ENCODE measurements at regions of chr1 and their contacts with region 1.

Region 1: DNA sequence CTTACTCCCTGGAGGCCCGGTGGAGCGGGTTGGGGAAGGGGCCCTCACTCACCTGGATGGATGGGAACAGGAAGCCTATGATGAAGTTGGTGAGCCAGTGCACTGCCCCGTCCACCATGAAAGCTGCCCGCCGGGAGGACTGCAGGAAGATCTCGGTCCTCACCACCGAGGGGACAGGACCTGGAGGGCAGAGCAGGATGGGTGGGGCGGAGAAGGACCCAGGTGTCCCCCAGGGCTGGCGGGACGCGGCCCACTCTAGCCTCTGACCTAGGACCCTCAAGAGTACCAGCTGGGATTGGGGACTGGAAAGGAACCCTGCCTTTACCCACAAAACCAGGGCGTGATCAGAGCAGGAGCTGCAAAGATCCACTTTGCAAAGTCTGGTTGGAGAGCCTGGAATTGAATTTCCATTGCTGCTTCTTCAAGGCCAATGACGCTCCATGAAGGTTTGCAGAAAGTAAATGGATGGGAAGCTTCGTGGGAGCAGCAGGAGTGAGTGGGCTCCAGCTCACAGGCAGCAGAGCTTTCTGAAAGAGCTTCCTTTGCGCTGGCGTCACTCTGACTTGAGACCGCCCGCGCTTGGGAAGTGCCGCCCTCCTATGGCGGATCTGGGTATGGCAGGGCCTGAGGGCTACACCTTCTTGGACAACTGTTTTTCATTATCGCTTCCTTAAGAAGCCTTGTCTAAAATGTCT is 21.4 kb downstream of the SLC2A7 start:
- DNase-seq: peak; percentile 76
- H3K4me3 ChIP-seq: no peak overlapping the region
- H3K27ac ChIP-seq: no peak overlapping the region
- H3K27me3 ChIP-seq: peaks cover 2% of the 10 kb centered on the region
- CTCF ChIP-seq: peak; percentile 97

Region 2: DNA sequence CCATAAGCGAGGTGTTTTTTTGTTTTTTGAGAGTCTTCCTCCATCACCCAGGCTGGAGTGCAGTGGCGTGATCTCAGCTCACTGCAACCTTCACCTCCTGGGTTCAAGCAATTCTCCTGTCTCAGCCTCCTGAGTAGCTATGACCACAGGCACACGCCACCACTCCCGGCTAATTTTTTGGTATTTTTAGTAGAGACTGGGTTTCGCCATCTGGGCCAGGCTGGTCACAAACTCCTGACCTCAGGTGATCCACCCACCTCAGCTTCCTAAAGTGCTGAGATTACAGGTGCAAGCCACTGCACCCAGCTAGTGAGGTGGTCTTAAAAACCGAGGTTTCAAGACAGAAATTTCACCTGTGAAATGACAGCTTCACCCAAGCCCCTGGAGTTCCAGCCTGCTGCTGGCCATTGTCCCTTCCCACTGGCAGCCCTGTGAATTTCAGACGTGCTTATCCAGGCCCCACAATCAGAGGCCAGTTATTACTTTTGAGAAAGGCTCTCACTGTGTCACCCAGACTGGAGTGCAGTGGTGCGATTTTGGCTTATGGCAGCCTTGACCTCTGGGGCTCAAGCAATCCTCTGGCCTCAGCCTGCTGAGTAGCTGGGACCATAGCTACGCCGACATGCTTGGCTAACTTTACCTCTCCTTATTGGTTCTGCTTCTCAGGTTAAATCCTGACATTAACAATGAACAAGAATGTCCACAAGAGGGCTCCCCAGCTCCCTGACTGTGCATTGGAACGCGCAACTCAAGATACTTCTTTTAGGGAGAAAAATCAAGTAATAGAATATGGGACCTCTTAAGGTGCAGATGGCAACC is 145.8 kb before region 1 on chr1:
- CTCF ChIA-PET with region 1: interaction called, 24 read pairs
- POLR2A ChIA-PET with region 1: interaction called, 4 read pairs
- DNase-seq: no peak
- H3K4me3 ChIP-seq: no peak overlapping the region
- H3K27ac ChIP-seq: no peak overlapping the region
- H3K27me3 ChIP-seq: no peaks in the 10 kb centered on the region
- CTCF ChIP-seq: peak; percentile 71

Region 3: DNA sequence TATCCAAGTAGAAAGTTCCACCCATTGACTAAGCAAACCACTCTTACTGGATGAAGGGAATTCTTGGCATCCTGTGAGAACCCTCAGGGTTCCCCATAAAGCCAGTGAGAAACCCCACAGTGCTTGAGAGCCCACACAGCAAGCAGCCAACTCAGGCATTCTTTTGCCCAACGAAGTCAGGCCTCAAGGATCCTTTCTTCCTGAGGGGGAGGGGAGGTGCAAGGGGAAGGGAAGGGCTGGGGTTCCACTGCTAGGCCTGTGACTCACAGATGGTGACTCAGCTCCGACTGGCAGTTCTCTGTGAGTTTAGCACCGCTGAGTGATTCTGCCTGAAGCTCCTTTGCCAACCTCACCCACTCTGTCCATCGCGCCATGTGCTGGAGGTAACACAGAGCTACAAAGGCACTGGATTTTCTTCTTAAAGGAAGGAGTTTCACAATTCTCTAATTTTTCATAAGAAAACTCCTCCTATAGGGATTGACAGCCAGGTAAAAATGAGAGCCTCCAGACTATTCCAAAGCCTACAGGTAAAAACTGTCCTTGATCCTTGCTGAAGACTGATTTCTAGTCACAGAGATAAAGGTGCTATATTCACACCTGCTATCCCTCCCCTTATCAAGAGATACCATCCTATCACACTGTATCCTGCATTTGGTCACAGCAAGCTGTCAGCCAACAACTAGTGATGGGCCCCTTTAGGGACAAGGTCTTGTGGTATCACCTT is 131.2 kb before region 1 on chr1:
- CTCF ChIA-PET with region 1: interaction called, 12 read pairs
- POLR2A ChIA-PET with region 1: interaction called, 5 read pairs
- DNase-seq: peak; percentile 84
- H3K4me3 ChIP-seq: peak overlapping the region; percentile 20; the same call in 1 of the 2 replicates
- H3K27ac ChIP-seq: peak overlapping the region; percentile 65
- H3K27me3 ChIP-seq: no peaks in the 10 kb centered on the region
- CTCF ChIP-seq: no peak

Region 4: GRCh38 chr1:8925406-8925805 is 79.4 kb before region 1 on chr1:
- CTCF ChIA-PET with region 1: interaction called, 162 read pairs
- POLR2A ChIA-PET with region 1: no interaction called
- DNase-seq: no peak
- H3K4me3 ChIP-seq: no peak overlapping the region
- H3K27ac ChIP-seq: no peak overlapping the region
- H3K27me3 ChIP-seq: peaks cover 20% of the 10 kb centered on the region
- CTCF ChIP-seq: no peak

Region 5: DNA sequence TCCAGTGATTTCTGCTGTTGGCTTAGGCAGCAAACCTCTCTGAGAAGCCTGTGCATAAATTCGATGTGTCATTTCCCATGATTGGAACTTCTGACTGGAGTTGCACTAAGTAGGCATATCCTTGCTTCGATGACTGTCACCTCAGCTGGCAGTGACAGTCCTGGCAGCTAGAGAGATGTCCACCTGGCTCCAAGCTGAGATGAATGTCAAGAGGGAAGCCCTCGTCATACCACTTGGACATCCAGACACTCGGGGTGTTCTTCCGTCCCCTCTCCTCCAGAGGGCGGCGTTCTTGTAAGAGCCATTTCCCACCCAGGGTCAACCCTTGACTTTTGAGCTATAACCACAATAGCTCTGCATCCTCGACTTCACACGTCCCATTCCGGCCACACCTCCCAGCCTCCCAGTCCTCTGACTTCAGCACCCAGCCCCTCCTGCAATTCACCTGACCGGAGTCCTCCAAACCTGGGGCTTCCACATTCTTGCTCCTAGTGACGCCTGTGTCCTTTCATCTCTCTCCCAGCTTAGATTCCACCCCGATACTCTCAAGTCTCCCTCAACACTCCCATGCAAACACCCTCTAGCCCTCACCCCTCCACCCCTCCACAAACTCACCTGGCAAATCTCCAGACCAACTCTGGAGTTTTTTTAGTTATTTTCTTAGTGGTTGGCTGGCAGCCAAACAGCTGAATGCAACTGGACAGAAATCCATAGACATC is 41.9 kb before region 1 on chr1:
- CTCF ChIA-PET with region 1: interaction called, 12 read pairs
- POLR2A ChIA-PET with region 1: interaction called, 5 read pairs
- DNase-seq: no peak
- H3K4me3 ChIP-seq: no peak overlapping the region
- H3K27ac ChIP-seq: no peak overlapping the region
- H3K27me3 ChIP-seq: peaks cover 9% of the 10 kb centered on the region
- CTCF ChIP-seq: peak; percentile 43

Region 6: GRCh38 chr1:8987881-8988617 is 16.8 kb before region 1 on chr1:
- CTCF ChIA-PET with region 1: interaction called, 13 read pairs
- POLR2A ChIA-PET with region 1: no interaction called
- DNase-seq: no peak
- H3K4me3 ChIP-seq: no peak overlapping the region
- H3K27ac ChIP-seq: no peak overlapping the region
- H3K27me3 ChIP-seq: peaks cover 2% of the 10 kb centered on the region
- CTCF ChIP-seq: peak; percentile 95

Region 7: GRCh38 chr1:9028921-9029705 is 24.3 kb after region 1 on chr1:
- CTCF ChIA-PET with region 1: interaction called, 12 read pairs
- POLR2A ChIA-PET with region 1: interaction called, 6 read pairs
- DNase-seq: peak; percentile 27
- H3K4me3 ChIP-seq: no peak overlapping the region
- H3K27ac ChIP-seq: no peak overlapping the region
- H3K27me3 ChIP-seq: peaks cover 26% of the 10 kb centered on the region
- CTCF ChIP-seq: no peak

Region 8: GRCh38 chr1:9275567-9276034 is 270.8 kb after region 1 on chr1:
- CTCF ChIA-PET with region 1: no interaction called
- POLR2A ChIA-PET with region 1: no interaction called
- DNase-seq: no peak
- H3K4me3 ChIP-seq: no peak overlapping the region; the same call in 1 of the 2 replicates
- H3K27ac ChIP-seq: peak overlapping the region; percentile 12
- H3K27me3 ChIP-seq: no peaks in the 10 kb centered on the region
- CTCF ChIP-seq: no peak